ENCODE measurements at regions of chr17 and their contacts with region 1.

Region 1: DNA sequence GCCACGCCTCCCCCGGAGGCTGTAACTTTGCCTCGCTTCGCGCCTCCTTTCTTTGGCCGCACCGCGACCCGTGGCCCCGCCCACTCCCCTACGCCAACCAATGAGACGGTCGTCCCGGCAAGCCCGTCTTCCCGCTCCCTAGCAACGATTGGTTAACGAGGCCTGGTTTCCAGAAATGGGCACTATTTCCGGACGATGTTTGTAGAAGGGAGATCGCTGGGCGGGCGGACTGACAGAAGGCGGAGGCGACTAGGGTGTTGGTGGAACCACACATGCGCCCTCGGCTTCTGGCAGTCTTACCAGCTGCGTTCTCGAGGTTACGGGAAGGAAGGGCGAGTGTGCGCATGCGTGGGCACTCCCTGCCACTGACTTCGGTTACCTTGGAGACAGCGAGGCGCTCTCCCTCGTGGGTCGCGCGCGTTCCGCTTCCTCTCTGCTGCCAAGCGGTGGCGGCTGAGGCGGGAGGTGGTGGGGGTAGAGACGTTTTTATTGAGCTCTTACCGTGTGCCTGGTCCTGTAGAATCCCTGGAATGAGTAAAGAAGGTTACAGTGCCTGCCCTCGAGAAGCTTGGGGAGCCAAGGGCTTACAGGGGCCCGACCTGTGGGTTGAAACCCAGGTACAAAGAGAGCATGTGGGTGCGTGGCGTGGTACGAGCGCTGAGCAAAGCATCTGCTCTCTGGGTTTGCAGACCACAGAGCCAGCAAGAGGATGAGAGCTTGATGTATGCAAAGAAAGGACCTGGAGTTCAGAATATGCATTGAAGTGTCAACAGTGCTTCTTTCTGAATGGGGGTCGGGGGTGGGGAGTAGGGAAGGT is 500 bp upstream of the MAP3K14 start:
- DNase-seq: peak; percentile 100
- ATAC-seq: peak; percentile 79 to 83
- H3K4me3 ChIP-seq: peak overlapping the region; percentile 69
- H3K27ac ChIP-seq: peak overlapping the region; percentile 95
- H3K4me1 ChIP-seq: peaks cover 73% of the 10 kb centered on the region
- CTCF ChIP-seq: no peak
- EP300 ChIP-seq: no peak
- POLR2A ChIP-seq: peak; percentile 68
- RAD21 ChIP-seq: no peak

Region 2: DNA sequence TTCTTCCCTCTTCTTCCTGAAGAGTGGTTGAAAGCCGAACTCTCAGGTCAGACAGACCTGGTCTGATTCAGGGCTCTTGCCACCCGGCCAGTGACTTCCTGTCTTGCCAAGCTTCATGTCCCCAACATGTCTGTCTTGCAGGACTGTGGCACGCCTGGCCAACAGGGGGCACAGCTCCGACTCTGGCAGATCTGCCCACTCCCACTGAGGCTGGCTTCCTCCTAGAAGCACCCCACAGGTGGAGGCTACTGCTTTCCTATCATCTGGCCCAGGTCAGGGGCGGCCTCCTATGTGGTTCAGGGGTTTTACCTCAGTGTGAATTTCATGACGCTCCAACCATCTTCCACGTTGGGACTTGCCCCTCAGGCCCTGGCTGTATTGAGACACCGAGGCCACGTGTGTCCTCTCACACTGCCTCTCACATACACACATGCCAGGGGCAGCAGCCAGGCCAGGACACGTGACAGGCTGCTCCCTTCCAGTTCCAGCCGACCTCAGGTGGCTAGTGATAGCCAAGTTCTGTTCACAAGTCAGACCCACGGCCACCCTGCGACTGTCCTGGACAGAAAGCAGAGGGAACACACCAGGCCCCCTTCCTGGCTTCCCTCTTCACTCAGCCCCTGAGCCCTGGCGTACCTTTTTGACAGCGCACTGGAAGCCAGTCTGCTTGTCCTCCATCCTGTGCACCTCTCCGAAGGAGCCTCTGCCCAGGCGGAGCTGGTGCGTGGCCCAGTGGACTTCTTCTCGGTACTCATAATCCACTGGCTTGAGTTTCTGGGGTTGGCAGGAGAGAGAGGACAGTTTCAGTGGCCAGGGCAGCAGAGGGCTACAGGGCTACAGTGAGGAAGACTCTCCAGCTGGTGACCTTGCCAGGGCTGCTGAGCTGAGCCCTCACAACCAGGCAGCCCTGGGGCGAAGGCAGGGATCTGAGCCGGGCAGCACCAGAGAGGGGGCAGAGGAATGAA is 32.9 kb before region 1 on chr17:
- CTCF ChIA-PET with region 1: interaction called, 181 read pairs
- POLR2A ChIA-PET with region 1: interaction called, 6 read pairs
- DNase-seq: peak in 1 of 2 experiments; percentile 65
- ATAC-seq: peak; percentile 41 to 60; a peak in 4 of 6 replicates
- H3K4me3 ChIP-seq: no peak overlapping the region
- H3K27ac ChIP-seq: peak overlapping the region; percentile 49 to 74; a peak in 5 of 6 replicates
- H3K4me1 ChIP-seq: peaks cover 28% of the 10 kb centered on the region
- CTCF ChIP-seq: peak; percentile 44
- EP300 ChIP-seq: no peak
- POLR2A ChIP-seq: no peak
- RAD21 ChIP-seq: peak; percentile 28 to 34; a peak in 3 of 5 replicates

Region 3: GRCh38 chr17:45293413-45294211 is 23.7 kb before region 1 on chr17:
- CTCF ChIA-PET with region 1: interaction called, 108 read pairs
- POLR2A ChIA-PET with region 1: interaction called, 13 read pairs
- DNase-seq: peak; percentile 93 to 97
- ATAC-seq: peak; percentile 84 to 86
- H3K4me3 ChIP-seq: peak overlapping the region; percentile 8; the same call in 1 of the 3 replicates
- H3K27ac ChIP-seq: peak overlapping the region; percentile 90 to 92
- H3K4me1 ChIP-seq: peaks cover 90% of the 10 kb centered on the region
- CTCF ChIP-seq: peak; percentile 34
- EP300 ChIP-seq: peak; percentile 55 to 57; a peak in 2 of 5 replicates
- POLR2A ChIP-seq: no peak
- RAD21 ChIP-seq: peak; percentile 57 to 60

Region 4: GRCh38 chr17:45332989-45333701 is 15.8 kb after region 1 on chr17:
- CTCF ChIA-PET with region 1: interaction called, 23 read pairs
- POLR2A ChIA-PET with region 1: interaction called, 6 read pairs
- DNase-seq: no peak
- ATAC-seq: no peak; a peak in 1 of 6 replicates
- H3K4me3 ChIP-seq: no peak overlapping the region
- H3K27ac ChIP-seq: peak overlapping the region in 1 of 2 experiments; percentile 73; a peak in 3 of 6 replicates
- H3K4me1 ChIP-seq: peaks cover 21% of the 10 kb centered on the region
- CTCF ChIP-seq: no peak
- EP300 ChIP-seq: no peak
- POLR2A ChIP-seq: no peak
- RAD21 ChIP-seq: no peak

Region 5: DNA sequence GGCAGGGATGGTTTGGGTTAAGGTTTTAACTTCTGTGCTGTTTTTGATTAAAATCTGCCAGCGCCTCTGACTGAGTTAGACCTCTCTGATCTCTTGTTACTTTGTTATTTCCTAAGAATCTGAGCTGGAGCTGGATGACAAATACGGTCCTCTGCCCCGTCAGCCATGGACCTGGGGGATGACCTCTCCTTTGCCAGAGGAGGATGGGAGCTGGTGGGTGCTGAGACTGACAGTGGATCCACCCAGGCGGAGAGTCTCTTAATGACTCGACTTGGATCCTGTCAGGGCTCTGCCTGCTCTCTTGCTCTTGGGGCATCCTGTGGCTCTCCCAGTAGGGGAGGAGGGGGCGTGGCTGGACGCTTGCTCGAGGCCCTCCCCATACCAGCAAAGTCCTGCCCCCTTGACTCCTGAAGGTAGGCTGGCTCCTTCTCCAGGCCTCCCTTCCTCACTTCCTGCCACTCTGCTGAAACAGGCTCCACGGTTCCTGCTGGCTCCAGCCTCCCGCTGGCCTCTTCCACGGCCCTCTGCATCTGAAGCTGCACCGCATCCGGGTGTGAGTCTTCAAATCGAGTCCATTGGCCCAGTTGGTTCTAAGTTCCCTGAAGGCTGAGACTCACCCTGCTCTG is 24.3 kb after region 1 on chr17:
- CTCF ChIA-PET with region 1: interaction called, 15 read pairs
- POLR2A ChIA-PET with region 1: interaction called, 10 read pairs
- DNase-seq: peak; percentile 94 to 96
- ATAC-seq: peak; percentile 98 to 99
- H3K4me3 ChIP-seq: peak overlapping the region; percentile 37
- H3K27ac ChIP-seq: peak overlapping the region; percentile 89 to 91
- H3K4me1 ChIP-seq: peaks cover 39% of the 10 kb centered on the region
- CTCF ChIP-seq: no peak
- EP300 ChIP-seq: no peak
- POLR2A ChIP-seq: peak; percentile 91
- RAD21 ChIP-seq: 0 out of 5 replicates have a peak, but pooled peaks of 1 of the 2 experiments have one; percentile 29

Region 6: GRCh38 chr17:45364531-45365390 is 47.4 kb after region 1 on chr17:
- CTCF ChIA-PET with region 1: interaction called, 89 read pairs
- POLR2A ChIA-PET with region 1: interaction called, 105 read pairs
- DNase-seq: peak in 1 of 2 experiments; percentile 44
- ATAC-seq: peak; percentile 72 to 78; a peak in 5 of 6 replicates
- H3K4me3 ChIP-seq: no peak overlapping the region
- H3K27ac ChIP-seq: peak overlapping the region; percentile 55 to 82; a peak in 5 of 6 replicates
- H3K4me1 ChIP-seq: peaks cover 34% of the 10 kb centered on the region
- CTCF ChIP-seq: no peak
- EP300 ChIP-seq: no peak
- POLR2A ChIP-seq: no peak
- RAD21 ChIP-seq: no peak

Region 7: DNA sequence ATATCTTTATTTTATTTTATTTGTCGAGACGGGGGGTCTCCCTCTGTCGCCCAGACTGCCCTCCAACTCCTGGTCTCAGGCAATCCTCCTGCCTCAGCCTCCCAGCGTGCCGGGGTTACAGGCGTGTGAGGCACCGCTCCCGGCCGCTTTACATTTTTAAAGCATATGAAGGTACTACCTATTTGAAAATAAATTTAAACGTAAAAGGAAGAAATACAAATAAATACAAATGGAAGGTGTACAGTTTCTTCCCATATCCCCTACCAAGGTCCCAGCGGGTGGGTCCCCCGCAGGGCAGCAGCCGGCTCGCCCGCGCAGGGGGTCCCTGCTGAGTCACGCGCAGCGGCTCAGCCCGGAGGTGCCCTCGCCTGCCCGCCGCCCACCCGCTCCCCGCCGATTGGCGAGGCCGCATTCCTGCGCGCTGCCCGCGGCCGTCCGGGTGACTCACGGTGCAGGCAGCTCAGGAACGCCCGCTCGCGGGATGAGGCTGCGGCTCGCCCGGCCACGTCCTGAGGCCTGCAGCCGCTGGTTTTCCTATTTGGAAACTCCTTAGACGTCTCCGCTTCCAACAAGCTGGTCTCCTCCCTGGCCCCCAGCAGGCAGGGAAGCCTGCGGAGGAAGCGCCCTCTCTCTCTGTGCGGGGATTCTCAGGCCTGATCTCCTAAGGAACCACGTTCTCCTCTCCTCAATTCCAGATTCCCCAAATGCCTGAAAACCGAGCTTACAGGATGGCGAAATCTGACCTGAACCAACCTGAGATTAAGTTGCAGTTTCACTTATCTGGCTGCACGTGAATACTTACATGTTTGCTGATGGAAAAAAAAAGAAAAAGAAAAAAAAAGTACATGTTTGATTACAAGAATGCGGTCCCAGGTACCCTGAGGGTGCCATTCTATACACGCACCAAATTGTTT is 54.4 kb after region 1 on chr17:
- CTCF ChIA-PET with region 1: interaction called, 89 read pairs
- POLR2A ChIA-PET with region 1: interaction called, 105 read pairs
- DNase-seq: peak; percentile 98
- ATAC-seq: peak; percentile 93 to 95
- H3K4me3 ChIP-seq: no peak overlapping the region; the same call in 2 of the 3 replicates
- H3K27ac ChIP-seq: peak overlapping the region; percentile 95 to 97
- H3K4me1 ChIP-seq: peaks cover 84% of the 10 kb centered on the region
- CTCF ChIP-seq: no peak; the same call in 1 of the 3 replicates
- EP300 ChIP-seq: peak; percentile 97 to 99
- POLR2A ChIP-seq: no peak; the same call in 1 of the 2 replicates
- RAD21 ChIP-seq: peak; percentile 44 to 71; a peak in 4 of 5 replicates

Region 8: GRCh38 chr17:46193626-46194392 is 876.5 kb after region 1 on chr17:
- CTCF ChIA-PET with region 1: no interaction called
- POLR2A ChIA-PET with region 1: no interaction called
- DNase-seq: peak; percentile 97 to 100
- ATAC-seq: peak; percentile 84 to 97
- H3K4me3 ChIP-seq: peak overlapping the region; percentile 65
- H3K27ac ChIP-seq: peak overlapping the region; percentile 90 to 97
- H3K4me1 ChIP-seq: peaks cover 49% of the 10 kb centered on the region
- CTCF ChIP-seq: peak; percentile 80
- EP300 ChIP-seq: no peak
- POLR2A ChIP-seq: peak; percentile 88
- RAD21 ChIP-seq: peak in 1 of 2 experiments; percentile 20; a peak in 2 of 5 replicates